ENCODE measurements at regions of chr5 and their contacts with region 1.

Region 1: GRCh38 chr5:177554474-177555111 is at the start of gene FAM193B:
- DNase-seq: peak; percentile 96 to 98
- ATAC-seq: peak; percentile 96
- H3K4me3 ChIP-seq: peak within 1 kb of the TSS; percentile 67
- H3K27ac ChIP-seq: peak within 1 kb of the TSS in 1 of 2 donors; percentile 4
- H3K4me1 ChIP-seq: no peaks in the 10 kb centered on the region
- H3K27me3 ChIP-seq: no peaks in the 10 kb centered on the region
- total RNA-seq, gene FAM193B: 67.5 to 113 TPM

Region 2: GRCh38 chr5:177592010-177592834 is 37.6 kb after region 1 on chr5 and contains the start of gene TMED9:
- intact Hi-C with region 1: loop called in 1 of 2 experiments (anchors 5 kb)
- DNase-seq: peak; percentile 90 to 95
- ATAC-seq: peak; percentile 94
- H3K4me3 ChIP-seq: peak within 1 kb of the TSS; percentile 46 to 88
- H3K27ac ChIP-seq: no peak within 1 kb of the TSS
- H3K4me1 ChIP-seq: no peaks in the 10 kb centered on the region
- H3K27me3 ChIP-seq: no peaks in the 10 kb centered on the region
- total RNA-seq, gene TMED9: 119 to 137 TPM

Region 3: GRCh38 chr5:177607452-177608192 is 53.0 kb after region 1 on chr5:
- intact Hi-C with region 1: no loop called
- DNase-seq: peak; percentile 80 to 89
- ATAC-seq: peak; percentile 75
- H3K4me3 ChIP-seq: no peak overlapping the region
- H3K27ac ChIP-seq: no peak overlapping the region
- H3K4me1 ChIP-seq: no peaks in the 10 kb centered on the region
- H3K27me3 ChIP-seq: no peaks in the 10 kb centered on the region